A673 (cell line): ENCODE measurements at regions of chr1 and their contacts with region 1.

Region 1: DNA sequence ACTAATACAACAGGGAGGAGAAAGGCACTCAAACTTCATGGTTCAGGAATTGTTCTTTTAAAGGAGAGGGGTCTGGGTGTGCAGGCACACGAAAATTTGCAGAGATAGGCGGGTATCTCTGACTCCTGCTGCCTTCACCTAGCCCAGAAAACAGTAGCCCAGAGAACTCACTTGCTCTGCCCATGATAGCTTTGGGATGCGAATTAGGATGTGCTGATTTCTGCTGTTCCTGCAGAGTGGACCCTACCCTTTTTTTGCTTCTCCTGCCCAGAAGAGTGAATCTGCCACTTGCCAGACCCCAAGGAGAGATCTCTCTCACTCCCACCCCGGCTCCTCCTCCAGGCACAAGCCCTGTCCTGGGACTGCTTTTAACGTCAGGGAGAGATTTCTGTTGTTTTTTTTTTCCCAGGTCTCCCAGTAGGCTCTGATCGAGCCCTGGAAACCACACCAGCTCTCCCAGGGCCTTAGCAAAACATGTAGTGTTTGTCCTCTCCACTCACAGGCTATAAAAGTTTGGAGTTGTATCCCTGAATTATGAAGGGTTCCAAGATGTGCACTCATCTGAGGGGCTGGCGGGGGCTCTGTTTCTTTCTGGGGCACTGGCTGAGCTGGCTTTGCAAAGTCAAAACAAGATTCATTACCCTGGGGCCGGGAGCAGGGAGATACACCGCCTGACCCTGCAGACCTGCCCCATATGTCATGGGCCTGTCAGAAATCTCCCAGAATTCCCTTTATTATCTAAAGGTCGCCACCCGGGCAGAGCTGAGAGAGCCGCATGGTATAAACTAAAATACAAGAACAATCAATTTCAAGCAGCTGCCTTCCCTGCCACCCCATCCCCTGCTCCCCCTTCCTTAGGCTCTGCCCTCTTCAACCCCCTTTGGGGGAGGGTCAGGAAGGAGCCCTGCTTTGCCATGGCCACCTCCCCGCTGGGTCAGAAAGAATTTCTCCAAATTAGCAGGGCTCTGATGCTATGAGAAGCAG is 17.9 kb downstream of the PLXNA2 start:
- DNase-seq: no peak
- H3K4me3 ChIP-seq: no peak overlapping the region
- H3K27ac ChIP-seq: no peak overlapping the region
- H3K4me1 ChIP-seq: no peaks in the 10 kb centered on the region
- H3K27me3 ChIP-seq: peaks cover 81% of the 10 kb centered on the region
- CTCF ChIP-seq: no peak

Region 2: DNA sequence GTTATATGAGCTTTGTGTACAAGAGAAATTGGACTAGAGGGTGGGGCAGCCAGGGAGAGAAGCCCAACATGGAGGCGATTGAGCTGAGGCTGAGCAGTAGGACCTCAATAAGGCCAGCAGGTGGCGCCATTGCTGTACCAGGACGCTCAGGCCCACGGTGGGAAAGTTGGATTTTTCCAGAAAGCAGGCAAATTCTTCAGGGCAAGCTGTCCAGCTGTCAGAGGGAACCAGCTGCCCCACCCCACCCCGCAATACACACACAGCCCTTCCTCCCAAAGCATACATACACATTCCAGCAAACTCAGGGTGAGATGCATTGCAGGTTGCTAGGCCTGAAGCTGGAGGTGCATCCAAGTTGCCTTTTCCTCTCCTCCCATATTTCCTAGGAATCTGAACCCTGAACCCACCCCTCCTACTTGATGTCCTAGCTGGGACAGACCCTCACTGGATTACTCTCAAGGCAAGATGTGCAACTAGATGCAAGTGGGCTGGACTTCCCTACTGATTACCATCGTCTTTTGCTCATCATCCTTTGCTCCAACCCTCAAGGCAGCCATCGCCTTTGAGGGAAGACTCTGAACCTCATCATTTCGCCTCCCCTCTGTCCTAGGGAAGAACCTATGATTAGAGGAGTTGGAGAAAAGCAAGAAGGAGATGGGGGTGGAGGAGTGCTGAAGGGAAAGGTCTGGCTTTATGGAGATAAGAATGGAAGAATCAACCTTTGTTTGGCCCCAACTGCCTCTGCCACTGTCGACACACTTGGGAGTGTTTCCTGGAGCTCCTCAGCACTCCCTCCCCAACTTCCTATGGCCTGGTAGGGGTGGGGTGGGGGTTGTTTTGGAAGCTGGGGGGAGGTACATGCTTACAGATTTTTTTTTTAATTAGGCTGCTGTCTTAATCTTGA is 340.9 kb before region 1 on chr1:
- CTCF ChIA-PET with region 1: interaction called, 13 read pairs
- POLR2A ChIA-PET with region 1: no interaction called
- intact Hi-C with region 1: no loop called
- DNase-seq: peak; percentile 77
- H3K4me3 ChIP-seq: no peak overlapping the region
- H3K27ac ChIP-seq: no peak overlapping the region
- H3K4me1 ChIP-seq: no peaks in the 10 kb centered on the region
- H3K27me3 ChIP-seq: no peaks in the 10 kb centered on the region
- CTCF ChIP-seq: peak; percentile 97

Region 3: GRCh38 chr1:208071435-208072031 is 154.7 kb before region 1 on chr1:
- CTCF ChIA-PET with region 1: no interaction called
- POLR2A ChIA-PET with region 1: no interaction called
- intact Hi-C with region 1: no loop called
- DNase-seq: no peak
- H3K4me3 ChIP-seq: no peak overlapping the region
- H3K27ac ChIP-seq: no peak overlapping the region
- H3K4me1 ChIP-seq: no peaks in the 10 kb centered on the region
- H3K27me3 ChIP-seq: peaks cover 14% of the 10 kb centered on the region
- CTCF ChIP-seq: no peak